ENCODE measurements at regions of chr19 and their contacts with region 1.

Region 1: GRCh38 chr19:40549007-40549708 is 27.5 kb upstream of the SHKBP1 start:
- DNase-seq: peak; percentile 42
- H3K4me3 ChIP-seq: no peak overlapping the region
- H3K27ac ChIP-seq: no peak overlapping the region
- H3K4me1 ChIP-seq: no peaks in the 10 kb centered on the region
- H3K27me3 ChIP-seq: peaks cover 14 to 16% of the 10 kb centered on the region in 2 experiments
- CTCF ChIP-seq: peak; percentile 7 to 67
- POLR2A ChIP-seq: no peak

Region 2: DNA sequence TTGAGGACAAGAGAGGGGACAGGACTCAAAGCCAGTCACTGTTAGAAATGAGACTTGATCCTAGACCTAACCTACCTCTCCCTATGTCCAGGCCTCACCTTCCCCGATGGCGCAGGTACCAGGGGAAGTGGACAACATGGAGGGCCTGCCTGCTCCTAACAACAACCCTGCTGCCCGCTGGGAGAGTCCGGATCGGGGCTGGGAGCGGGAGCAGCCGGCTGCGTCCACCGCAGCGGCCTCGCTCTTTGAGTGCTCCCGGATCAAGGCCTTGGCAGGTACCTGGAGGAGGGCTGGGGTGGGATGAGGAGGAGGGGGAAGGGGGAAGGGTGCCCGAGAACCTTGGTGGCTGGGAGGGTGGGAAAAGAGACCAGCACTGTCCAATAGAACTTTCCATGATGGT is 76.6 kb before region 1 on chr19:
- CTCF ChIA-PET with region 1: no interaction called
- POLR2A ChIA-PET with region 1: no interaction called
- dilution Hi-C with region 1: no loop called
- intact Hi-C with region 1: no loop called
- DNase-seq: no peak
- H3K4me3 ChIP-seq: no peak overlapping the region
- H3K27ac ChIP-seq: no peak overlapping the region
- H3K4me1 ChIP-seq: no peaks in the 10 kb centered on the region
- H3K27me3 ChIP-seq: peaks cover 0 to under 1% of the 10 kb centered on the region in 2 experiments
- CTCF ChIP-seq: no peak
- POLR2A ChIP-seq: no peak

Region 3: GRCh38 chr19:40560092-40560507 is 10.9 kb after region 1 on chr19:
- CTCF ChIA-PET with region 1: interaction called, 19 read pairs
- POLR2A ChIA-PET with region 1: no interaction called
- dilution Hi-C with region 1: no loop called
- intact Hi-C with region 1: no loop called
- DNase-seq: no peak
- H3K4me3 ChIP-seq: no peak overlapping the region
- H3K27ac ChIP-seq: no peak overlapping the region
- H3K4me1 ChIP-seq: no peaks in the 10 kb centered on the region
- H3K27me3 ChIP-seq: peaks cover 3 to 8% of the 10 kb centered on the region in 2 experiments
- CTCF ChIP-seq: no peak
- POLR2A ChIP-seq: no peak

Region 4: DNA sequence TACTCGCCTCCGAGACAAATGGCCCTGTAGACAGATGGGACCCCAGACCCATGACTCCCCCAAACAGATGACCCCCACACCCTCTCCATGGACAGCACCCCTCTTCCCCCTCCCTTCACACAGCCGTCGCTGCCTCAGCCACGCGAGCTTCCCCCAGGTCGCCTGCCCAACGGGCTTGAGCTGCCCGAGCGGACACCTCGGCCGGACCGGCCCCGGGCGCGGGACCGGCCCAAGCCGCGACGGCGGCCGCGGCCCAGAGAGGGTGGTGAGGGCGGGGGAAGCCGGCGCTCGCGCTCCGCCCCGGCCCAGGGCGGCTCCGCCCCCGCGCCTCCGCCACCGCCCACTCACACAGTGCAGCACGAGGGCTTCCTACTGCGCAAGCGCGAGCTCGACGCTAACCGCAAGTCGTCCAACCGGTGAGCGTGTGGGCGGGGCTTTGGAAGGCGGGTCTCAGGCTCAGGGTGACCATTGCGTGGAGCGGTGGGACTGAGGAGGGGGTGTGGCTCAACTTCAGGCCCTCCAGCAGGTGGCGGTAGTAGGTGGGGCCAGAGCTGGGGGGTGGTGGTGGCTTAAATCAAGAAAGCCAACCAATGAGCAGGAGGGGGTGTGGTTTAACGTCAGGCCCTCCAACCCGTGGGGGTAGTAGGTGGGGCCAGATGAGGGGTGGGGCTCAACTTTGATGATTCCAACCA is 21.3 kb after region 1 on chr19:
- CTCF ChIA-PET with region 1: interaction called, 16 read pairs
- POLR2A ChIA-PET with region 1: no interaction called
- dilution Hi-C with region 1: no loop called
- intact Hi-C with region 1: loop called (anchors 2 kb)
- DNase-seq: peak; percentile 99
- H3K4me3 ChIP-seq: peak overlapping the region in 1 of 3 experiments; percentile 32
- H3K27ac ChIP-seq: no peak overlapping the region
- H3K4me1 ChIP-seq: peaks cover 4% of the 10 kb centered on the region
- H3K27me3 ChIP-seq: peaks cover 22% of the 10 kb centered on the region in 2 experiments
- CTCF ChIP-seq: peak in 1 of 2 donors; percentile 36
- POLR2A ChIP-seq: no peak

Measured in endothelial cell of umbilical vein (primary cell).